ENCODE measurements at regions of chrX and their contacts with region 1.

Region 1: GRCh38 chrX:120499301-120500072 is 30.4 kb upstream of the LAMP2 start:
- DNase-seq: no peak
- H3K4me3 Mint-ChIP-seq: no peak overlapping the region
- H3K27ac Mint-ChIP-seq: no peak overlapping the region
- H3K4me1 Mint-ChIP-seq: peaks cover 2% of the 10 kb centered on the region
- H3K27me3 Mint-ChIP-seq: no peaks in the 10 kb centered on the region

Region 2: DNA sequence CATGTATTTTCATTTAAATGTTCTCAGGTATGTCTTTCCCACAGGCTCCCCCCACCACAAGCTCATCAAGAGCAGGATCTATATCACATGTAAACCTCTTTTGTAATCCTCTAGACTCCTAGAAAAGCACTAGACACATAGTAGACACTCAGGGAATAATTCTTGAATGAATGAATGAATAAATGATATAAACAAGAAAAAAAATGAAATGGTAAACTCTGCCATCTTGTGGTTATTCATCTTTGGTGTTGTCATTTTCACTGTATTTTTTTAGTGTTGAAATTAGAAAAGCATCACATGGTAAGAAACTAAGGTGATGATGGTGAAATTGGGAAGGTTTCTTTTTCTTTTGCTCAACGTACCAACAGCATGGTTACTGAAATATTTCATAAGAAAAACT is 164.6 kb after region 1 on chrX:
- CTCF ChIA-PET with region 1: interaction called, 5 read pairs
- intact Hi-C with region 1: loop called (anchors 1 kb)
- DNase-seq: no peak
- H3K4me3 Mint-ChIP-seq: no peak overlapping the region
- H3K27ac Mint-ChIP-seq: peak overlapping the region; percentile 36
- H3K4me1 Mint-ChIP-seq: peaks cover 4% of the 10 kb centered on the region
- H3K27me3 Mint-ChIP-seq: no peaks in the 10 kb centered on the region

Region 3: GRCh38 chrX:120769576-120770341 is 270.3 kb after region 1 on chrX:
- CTCF ChIA-PET with region 1: interaction called, 7 read pairs
- intact Hi-C with region 1: loop called (anchors 1 kb)
- DNase-seq: peak; percentile 21
- H3K4me3 Mint-ChIP-seq: no peak overlapping the region
- H3K27ac Mint-ChIP-seq: no peak overlapping the region
- H3K4me1 Mint-ChIP-seq: peaks cover 2% of the 10 kb centered on the region
- H3K27me3 Mint-ChIP-seq: no peaks in the 10 kb centered on the region

Region 4: GRCh38 chrX:121084903-121085611 is 585.6 kb after region 1 on chrX:
- CTCF ChIA-PET with region 1: no interaction called
- intact Hi-C with region 1: no loop called
- DNase-seq: no peak
- H3K4me3 Mint-ChIP-seq: no peak overlapping the region
- H3K27ac Mint-ChIP-seq: no peak overlapping the region
- H3K4me1 Mint-ChIP-seq: no peaks in the 10 kb centered on the region
- H3K27me3 Mint-ChIP-seq: no peaks in the 10 kb centered on the region

Region 5: DNA sequence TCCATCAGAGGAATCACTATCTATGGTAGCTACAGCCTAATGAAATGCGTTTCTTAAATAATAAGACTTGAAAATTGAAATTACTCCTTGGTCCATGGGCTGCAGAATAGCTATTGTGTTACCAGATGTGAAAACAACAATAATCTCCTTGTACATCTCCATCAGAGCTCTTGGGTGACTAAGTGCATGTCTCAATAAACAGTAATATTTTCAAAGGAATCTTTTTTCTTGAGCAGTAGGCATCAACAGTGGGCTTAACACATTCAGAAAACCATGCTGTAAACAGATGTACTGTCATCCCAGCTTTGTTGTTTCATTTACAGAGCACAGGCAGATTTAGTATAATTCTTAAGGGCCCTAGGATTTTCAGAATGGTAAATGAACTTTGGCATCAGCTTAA is 615.2 kb after region 1 on chrX:
- CTCF ChIA-PET with region 1: no interaction called
- intact Hi-C with region 1: no loop called
- DNase-seq: no peak
- H3K4me3 Mint-ChIP-seq: no peak overlapping the region
- H3K27ac Mint-ChIP-seq: no peak overlapping the region
- H3K4me1 Mint-ChIP-seq: no peaks in the 10 kb centered on the region
- H3K27me3 Mint-ChIP-seq: no peaks in the 10 kb centered on the region

Region 6: DNA sequence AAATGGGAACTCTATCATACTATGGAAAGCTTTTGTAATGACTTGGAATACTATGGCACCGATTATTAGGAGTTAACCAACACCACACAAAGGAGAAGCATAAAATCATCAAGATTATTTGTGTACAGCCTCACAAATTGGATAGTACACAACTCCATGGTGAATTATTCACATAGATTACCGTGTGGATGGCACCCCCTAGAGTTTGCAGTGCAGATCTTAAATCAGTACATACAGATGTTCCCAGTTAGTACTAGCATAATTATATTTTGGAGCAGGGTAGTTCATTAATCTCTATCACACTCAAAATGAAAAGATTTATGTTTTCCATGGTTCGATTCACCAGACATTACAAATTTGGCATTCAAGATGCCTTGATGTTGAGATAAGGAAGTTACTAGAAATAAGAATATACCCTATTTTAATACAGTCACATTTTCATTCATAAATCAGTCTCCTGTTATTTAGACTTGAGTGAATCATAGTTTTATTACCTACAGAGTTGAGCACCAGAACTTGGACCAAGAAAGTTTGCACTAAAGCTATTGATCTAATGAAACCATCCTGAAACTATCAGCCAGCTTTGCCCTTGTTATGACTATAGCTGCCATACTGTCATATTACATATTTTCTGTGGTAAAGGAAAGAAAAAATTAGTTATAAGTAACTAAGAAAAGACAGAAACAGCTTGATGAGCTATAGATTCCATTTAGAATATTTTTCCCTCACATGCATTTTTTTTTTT is 1079.7 kb after region 1 on chrX:
- CTCF ChIA-PET with region 1: no interaction called
- intact Hi-C with region 1: loop called (anchors 5 kb)
- DNase-seq: peak; percentile 46
- H3K4me3 Mint-ChIP-seq: no peak overlapping the region
- H3K27ac Mint-ChIP-seq: no peak overlapping the region
- H3K4me1 Mint-ChIP-seq: peaks cover 13% of the 10 kb centered on the region
- H3K27me3 Mint-ChIP-seq: peaks cover under 1% of the 10 kb centered on the region

Measured in activated naive CD4-positive, alpha-beta T cell treated with anti-CD3 and anti-CD28 coated beads for 36 hours (primary cell).